ENCODE measurements at regions of chr9 and their contacts with region 1.

Region 1: DNA sequence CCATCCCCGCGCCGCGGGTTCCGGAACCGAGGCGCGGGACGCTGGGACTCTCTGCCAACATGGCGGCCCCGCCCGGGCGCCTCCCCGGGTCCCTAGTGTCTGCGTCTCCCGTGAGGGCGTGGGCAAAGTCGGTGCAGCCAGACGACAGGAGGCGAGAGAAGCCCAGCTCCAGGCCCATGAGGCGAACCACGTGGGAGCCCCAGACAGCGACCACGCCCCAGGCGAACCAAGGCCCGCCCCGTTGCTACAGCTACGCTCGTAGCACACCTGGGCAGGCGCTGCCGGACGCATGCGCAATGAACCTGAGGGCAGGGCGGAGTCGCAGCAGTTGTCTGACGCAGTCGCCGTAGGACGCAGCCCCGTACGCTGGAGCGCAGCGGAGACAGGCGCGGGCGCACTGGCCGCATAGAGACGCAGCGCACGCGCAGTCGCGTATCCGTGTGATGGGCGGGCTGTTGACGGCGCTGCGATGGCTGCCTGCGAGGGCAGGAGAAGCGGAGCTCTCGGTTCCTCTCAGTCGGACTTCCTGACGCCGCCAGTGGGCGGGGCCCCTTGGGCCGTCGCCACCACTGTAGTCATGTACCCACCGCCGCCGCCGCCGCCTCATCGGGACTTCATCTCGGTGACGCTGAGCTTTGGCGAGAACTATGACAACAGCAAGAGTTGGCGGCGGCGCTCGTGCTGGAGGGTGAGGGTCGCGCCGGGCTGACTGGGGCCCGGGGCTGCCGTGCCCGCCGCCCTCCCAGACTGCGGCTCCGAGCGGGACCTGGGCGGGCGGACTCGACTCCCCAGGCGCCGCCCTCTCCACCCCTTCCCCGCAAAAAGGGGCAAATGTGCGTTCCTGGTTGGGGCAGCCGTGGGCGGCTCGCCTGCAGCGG is at the start of gene MAN1B1:
- DNase-seq: peak; percentile 100
- H3K4me3 Mint-ChIP-seq: peak within 1 kb of the TSS; percentile 89
- H3K27ac Mint-ChIP-seq: peak within 1 kb of the TSS; percentile 90
- H3K4me1 Mint-ChIP-seq: peaks cover 46% of the 10 kb centered on the region
- H3K27me3 Mint-ChIP-seq: no peaks in the 10 kb centered on the region
- total RNA-seq, gene MAN1B1: 51.4 to 51.9 TPM

Region 2: DNA sequence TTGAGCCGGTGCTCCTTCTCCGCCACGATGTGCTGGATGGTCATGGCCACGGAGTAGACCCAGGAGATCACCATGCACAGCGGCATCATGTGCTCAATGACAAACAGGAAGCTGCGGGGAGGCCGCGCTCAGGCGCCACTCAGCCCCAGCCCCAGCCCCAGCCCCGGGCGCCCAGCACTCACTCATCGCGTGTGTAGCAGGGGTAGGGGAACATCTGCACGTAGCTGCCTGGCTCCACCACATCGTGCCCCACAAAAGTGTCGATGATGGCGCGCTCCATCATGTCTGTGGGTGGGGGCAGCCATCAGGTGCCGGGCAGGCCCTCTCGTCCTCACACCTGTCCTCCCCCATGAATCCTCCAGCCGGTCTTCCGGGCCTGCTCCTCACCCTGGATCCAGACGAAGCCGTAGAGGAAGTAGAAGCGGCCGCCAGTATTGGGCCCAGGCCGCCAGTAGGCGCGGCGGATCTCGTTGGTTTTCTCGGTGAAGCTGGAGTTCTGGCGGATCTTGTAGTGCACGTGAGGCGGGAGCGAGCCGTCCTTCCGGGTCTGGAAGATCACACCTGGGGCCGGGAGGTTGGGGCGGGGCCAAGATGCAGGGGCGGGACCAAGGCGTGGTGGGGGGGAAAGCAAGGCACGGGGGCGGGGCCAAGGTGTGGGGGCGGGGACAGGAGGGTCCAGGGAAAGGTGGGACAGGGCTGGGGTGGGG is 68.8 kb before region 1 on chr9:
- CTCF ChIA-PET with region 1: no interaction called
- POLR2A ChIA-PET with region 1: no interaction called
- DNase-seq: no peak
- H3K4me3 Mint-ChIP-seq: no peak overlapping the region
- H3K27ac Mint-ChIP-seq: no peak overlapping the region
- H3K4me1 Mint-ChIP-seq: peaks cover 6% of the 10 kb centered on the region
- H3K27me3 Mint-ChIP-seq: no peaks in the 10 kb centered on the region

Region 3: GRCh38 chr9:137029058-137029936 is 57.5 kb before region 1 on chr9:
- CTCF ChIA-PET with region 1: interaction called, 15 read pairs
- POLR2A ChIA-PET with region 1: interaction called, 4 read pairs
- DNase-seq: peak; percentile 79
- H3K4me3 Mint-ChIP-seq: peak overlapping the region; percentile 76
- H3K27ac Mint-ChIP-seq: peak overlapping the region; percentile 91
- H3K4me1 Mint-ChIP-seq: peaks cover 57% of the 10 kb centered on the region
- H3K27me3 Mint-ChIP-seq: no peaks in the 10 kb centered on the region

Region 4: DNA sequence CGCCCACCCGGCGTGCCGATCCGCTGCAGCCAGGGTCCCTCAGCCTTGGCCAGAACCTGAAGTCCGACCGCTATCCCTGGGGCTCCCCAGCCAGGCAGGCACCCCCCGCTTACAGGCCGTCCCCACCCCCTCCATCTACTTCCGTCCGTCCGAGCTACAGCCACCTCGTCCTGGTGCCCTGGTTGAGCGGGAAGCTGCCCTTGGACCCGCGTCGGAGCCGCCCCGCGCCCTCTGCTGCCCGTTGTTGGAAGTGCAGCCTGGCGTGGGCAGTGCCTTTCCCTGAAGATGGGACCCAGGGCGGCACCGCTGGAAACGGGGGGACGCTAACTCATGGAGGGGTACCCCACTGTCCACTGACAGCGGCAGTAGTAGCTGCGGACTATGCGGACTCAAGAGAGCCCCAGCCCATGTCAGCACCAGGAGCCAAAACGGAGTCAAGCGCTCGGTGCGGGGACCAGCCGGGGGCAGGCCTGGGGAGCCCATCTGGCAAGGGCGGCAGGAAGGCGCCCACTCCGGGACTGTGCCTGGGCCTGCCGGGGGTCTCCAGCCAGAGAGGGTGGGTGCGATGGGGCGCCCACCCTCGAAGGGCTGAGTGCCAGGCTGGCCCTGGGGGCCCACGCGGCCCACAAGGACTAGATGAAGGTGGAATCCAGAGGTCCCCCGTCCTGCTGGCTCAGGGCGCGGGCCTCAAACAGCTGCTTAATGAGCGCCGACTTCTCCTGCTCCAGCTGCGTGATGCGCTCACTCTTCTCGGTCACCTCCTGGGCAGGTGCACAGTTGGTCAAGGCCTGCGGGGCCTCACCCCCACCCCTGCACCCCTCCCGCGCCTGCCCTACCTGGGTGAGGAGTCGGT is 22.5 kb before region 1 on chr9:
- CTCF ChIA-PET with region 1: interaction called, 73 read pairs
- POLR2A ChIA-PET with region 1: interaction called, 87 read pairs
- DNase-seq: peak; percentile 63
- H3K4me3 Mint-ChIP-seq: no peak overlapping the region
- H3K27ac Mint-ChIP-seq: no peak overlapping the region
- H3K4me1 Mint-ChIP-seq: peaks cover 19% of the 10 kb centered on the region
- H3K27me3 Mint-ChIP-seq: no peaks in the 10 kb centered on the region

Region 5: DNA sequence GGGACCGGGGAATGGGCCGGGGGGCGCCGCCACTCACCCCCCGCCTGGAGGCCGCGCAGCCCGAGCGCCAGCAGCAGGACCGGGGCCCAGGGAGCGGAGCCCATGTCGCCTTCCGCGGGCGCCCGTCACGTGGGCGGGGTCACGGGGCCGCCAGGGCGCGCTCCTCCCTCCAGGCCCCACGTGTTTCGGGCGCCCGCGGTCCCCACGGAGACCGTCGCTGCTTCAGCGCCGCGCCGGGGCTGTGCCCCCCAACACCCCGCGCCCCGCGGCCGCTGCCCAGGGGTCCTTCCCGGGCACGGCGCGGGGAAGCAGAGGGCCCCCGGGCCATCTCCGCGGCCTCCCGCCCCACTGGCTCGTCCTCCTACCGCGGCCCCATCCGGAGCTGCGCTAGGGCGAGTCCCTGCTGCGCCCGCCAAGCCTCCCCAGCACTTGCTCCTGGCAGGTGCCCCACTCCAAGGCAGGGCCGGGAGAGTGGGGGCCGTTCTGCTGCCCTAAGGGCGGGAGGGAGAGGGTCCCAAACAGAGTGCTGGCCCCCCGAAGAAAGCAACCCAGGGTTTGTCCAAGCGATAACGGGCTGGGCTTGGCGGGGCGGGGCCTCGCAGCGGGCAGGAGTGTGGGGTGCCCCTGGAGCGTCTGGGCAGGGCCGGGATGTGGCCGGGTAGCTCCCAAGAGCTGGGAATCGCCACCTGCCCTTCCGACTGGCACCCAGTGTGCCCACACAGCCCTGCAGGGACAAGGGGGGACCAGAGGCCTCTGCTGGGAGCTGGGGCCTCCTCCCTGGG is 28.0 kb after region 1 on chr9 and contains the start of gene DPP7:
- CTCF ChIA-PET with region 1: interaction called, 4 read pairs
- POLR2A ChIA-PET with region 1: interaction called, 11 read pairs
- DNase-seq: peak; percentile 84
- H3K4me3 Mint-ChIP-seq: peak within 1 kb of the TSS; percentile 69
- H3K27ac Mint-ChIP-seq: peak within 1 kb of the TSS; percentile 56
- H3K4me1 Mint-ChIP-seq: peaks cover 5% of the 10 kb centered on the region
- H3K27me3 Mint-ChIP-seq: no peaks in the 10 kb centered on the region
- total RNA-seq, gene DPP7: 253 to 257 TPM

Region 6: GRCh38 chr9:137188490-137189296 is 101.9 kb after region 1 on chr9 and contains the starts of genes ANAPC2 and SSNA1:
- CTCF ChIA-PET with region 1: interaction called, 4 read pairs
- POLR2A ChIA-PET with region 1: interaction called, 16 read pairs
- DNase-seq: peak; percentile 94
- H3K4me3 Mint-ChIP-seq: peak within 1 kb of the TSS; percentile 93
- H3K27ac Mint-ChIP-seq: peak within 1 kb of the TSS; percentile 97
- H3K4me1 Mint-ChIP-seq: peaks cover 40% of the 10 kb centered on the region
- H3K27me3 Mint-ChIP-seq: no peaks in the 10 kb centered on the region
- total RNA-seq, gene ANAPC2: 53.3 to 57.8 TPM
- total RNA-seq, gene SSNA1: 70.0 to 76.3 TPM

Measured in activated CD4-positive, alpha-beta memory T cell treated with anti-CD3 and anti-CD28 coated beads, Interleukin-2, amount 10 ng/mL, durations not matched to agents 7 days and 5 days (primary cell).